ENCODE measurements at regions of chr1 and their contacts with region 1.

Region 1: GRCh38 chr1:18820791-18821641 is 38.4 kb downstream of the TAS1R2 start:
- DNase-seq: peak; percentile 82 to 91 (median 88)
- ATAC-seq: peak; percentile 97
- H3K4me3 ChIP-seq: no peak overlapping the region
- H3K27ac ChIP-seq: no peak overlapping the region
- H3K4me1 ChIP-seq: peaks cover 0 to 10% of the 10 kb centered on the region in 2 experiments; a peak in 2 of 5 replicates
- H3K27me3 ChIP-seq: peaks cover 5 to 53% of the 10 kb centered on the region in 2 experiments
- CTCF ChIP-seq: peak; percentile 94 to 98 (median 96)
- EP300 ChIP-seq: no peak
- POLR2A ChIP-seq: no peak
- RAD21 ChIP-seq: peak; percentile 83 to 98

Region 2: DNA sequence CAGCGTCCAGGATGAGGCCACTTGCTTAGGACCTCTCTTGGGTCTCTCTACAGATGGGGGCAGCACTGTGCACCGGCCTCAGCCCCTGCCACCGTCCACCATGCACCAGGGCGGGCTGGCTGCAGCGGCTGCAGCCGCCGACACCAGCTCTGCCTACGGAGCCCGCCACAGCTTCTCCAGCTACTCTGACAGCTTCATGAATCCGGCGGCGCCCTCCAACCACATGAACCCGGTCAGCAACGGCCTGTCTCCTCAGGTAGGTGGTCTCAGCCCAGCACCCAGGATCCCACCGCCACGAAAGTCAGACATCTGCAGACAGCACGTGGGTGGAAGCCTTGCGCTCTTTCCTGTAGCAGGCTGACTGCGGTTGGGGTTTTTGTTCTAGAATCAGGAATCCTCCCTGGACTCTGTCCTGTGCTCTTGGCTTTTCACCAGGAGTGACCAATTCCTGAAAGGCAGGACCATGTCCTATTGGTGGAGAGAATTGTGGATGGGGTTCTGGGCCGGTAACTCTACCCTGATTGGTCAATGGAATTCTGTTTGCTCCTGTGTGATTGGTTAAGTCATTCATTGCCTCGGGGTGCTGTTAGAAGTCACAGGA is 117.9 kb before region 1 on chr1:
- CTCF ChIA-PET with region 1: no interaction called
- POLR2A ChIA-PET with region 1: no interaction called
- in situ Hi-C with region 1: no loop called
- intact Hi-C with region 1: loop called (anchors 2 kb)
- DNase-seq: peak; percentile 24 to 71 (median 42)
- ATAC-seq: peak; percentile 84
- H3K4me3 ChIP-seq: no peak overlapping the region
- H3K27ac ChIP-seq: no peak overlapping the region
- H3K4me1 ChIP-seq: peaks cover 0 to 5% of the 10 kb centered on the region in 2 experiments; a peak in 1 of 5 replicates
- H3K27me3 ChIP-seq: peaks cover 35 to 62% of the 10 kb centered on the region in 2 experiments
- CTCF ChIP-seq: peak; percentile 30 to 39 (median 38); a peak in 4 of 6 replicates
- EP300 ChIP-seq: no peak
- POLR2A ChIP-seq: no peak
- RAD21 ChIP-seq: peak in 1 of 2 experiments; percentile 32; a peak in 2 of 4 replicates

Region 3: DNA sequence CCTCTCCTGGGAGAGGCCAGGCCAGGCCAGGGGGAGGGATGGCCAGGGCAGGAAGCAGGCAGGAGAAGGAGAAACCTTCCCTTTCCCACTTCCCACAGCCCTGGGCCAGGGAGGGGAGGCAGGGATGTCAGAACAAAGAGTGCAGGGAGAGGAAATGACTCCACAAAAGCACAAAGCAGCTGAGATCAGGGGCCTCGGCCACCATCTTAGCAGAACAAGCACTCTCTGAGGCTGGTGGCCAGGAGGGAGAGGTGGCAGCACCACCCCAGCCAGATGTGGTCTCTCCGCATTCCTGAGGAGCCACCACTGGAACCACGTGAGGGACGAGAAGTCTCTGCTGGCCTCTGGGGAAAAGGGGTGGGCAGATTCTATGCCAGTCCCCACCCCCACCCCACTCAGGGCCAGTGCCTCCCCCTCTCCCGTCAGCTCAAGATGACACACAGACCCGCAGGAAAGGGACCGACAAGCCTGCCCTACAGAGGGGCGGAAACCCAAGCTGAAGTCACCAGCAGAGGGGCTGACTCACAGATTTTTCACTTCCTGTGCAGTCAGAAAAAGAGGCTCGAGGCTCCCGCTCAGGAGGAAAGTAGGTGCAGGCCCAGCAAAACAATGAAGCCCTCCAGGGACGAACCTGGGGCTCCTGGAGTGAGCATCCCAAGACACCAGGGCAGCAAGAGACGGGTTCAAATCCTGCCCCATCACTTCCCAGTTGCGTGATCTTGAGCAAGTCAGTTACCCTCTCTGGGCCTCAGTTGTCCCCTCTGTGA is 105.5 kb after region 1 on chr1:
- CTCF ChIA-PET with region 1: no interaction called
- POLR2A ChIA-PET with region 1: no interaction called
- in situ Hi-C with region 1: no loop called
- intact Hi-C with region 1: no loop called
- DNase-seq: peak; percentile 57 to 64 (median 60)
- ATAC-seq: peak; percentile 61
- H3K4me3 ChIP-seq: no peak overlapping the region
- H3K27ac ChIP-seq: no peak overlapping the region
- H3K4me1 ChIP-seq: peaks cover 19 to 20% of the 10 kb centered on the region in 2 experiments; a peak in 4 of 5 replicates
- H3K27me3 ChIP-seq: peaks cover 37 to 83% of the 10 kb centered on the region in 2 experiments
- CTCF ChIP-seq: no peak
- EP300 ChIP-seq: no peak
- POLR2A ChIP-seq: no peak
- RAD21 ChIP-seq: no peak